Right ventricle myocardium inferior (tissue), 1 donor: ENCODE measurements at regions of chr17 and their contacts with region 1.

Region 1: GRCh38 chr17:40018211-40019121 is 3.2 kb downstream of the CSF3 start:
- DNase-seq: peak; percentile 43
- ATAC-seq: peak; percentile 37

Region 2: GRCh38 chr17:39916918-39917317 is 101.5 kb before region 1 on chr17:
- intact Hi-C with region 1: no loop called
- DNase-seq: no peak
- ATAC-seq: no peak

Region 3: GRCh38 chr17:40062329-40063186 is 44.1 kb after region 1 on chr17 and contains the start of gene THRA:
- intact Hi-C with region 1: no loop called
- DNase-seq: peak; percentile 89
- ATAC-seq: peak; percentile 69
- total RNA-seq, gene THRA: 88.3 TPM

Region 4: GRCh38 chr17:40072735-40073346 is 54.4 kb after region 1 on chr17:
- intact Hi-C with region 1: no loop called
- DNase-seq: no peak
- ATAC-seq: no peak

Region 5: DNA sequence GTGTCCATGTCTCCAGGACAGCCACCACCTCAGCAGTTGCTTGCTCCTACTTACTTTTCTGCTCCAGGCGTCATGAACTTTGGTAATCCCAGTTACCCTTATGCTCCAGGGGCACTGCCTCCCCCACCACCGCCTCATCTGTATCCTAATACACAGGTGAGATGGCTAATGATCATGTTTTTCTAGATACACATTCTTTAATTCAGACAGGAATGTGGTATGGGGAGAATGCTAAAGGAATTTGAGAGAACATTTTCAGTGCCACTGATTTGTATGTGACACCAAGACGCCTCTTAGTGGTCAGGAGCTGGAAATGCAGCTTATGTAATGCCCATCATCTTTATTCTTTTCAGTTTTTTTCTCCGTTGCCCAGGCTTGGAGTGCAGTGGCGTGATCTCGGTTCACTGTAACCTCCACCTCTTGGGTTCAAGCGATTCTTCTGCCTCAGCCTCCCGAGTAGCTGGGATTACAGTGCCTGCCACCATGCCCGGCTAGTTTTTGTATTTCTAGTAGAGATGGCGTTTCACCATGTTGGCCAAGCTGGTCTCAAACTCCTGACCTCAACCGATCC is 149.9 kb after region 1 on chr17:
- intact Hi-C with region 1: loop called (anchors 1 kb)
- DNase-seq: no peak
- ATAC-seq: peak; percentile 73

Region 6: GRCh38 chr17:40191237-40192208 is 173.1 kb after region 1 on chr17:
- intact Hi-C with region 1: loop called (anchors 5 kb)
- DNase-seq: peak; percentile 89
- ATAC-seq: peak; percentile 85

Region 7: GRCh38 chr17:40602775-40603551 is 584.5 kb after region 1 on chr17:
- intact Hi-C with region 1: no loop called
- DNase-seq: no peak
- ATAC-seq: no peak